SK-N-SH (cell line): ENCODE measurements at regions of chr6 and their contacts with region 1.

Region 1: DNA sequence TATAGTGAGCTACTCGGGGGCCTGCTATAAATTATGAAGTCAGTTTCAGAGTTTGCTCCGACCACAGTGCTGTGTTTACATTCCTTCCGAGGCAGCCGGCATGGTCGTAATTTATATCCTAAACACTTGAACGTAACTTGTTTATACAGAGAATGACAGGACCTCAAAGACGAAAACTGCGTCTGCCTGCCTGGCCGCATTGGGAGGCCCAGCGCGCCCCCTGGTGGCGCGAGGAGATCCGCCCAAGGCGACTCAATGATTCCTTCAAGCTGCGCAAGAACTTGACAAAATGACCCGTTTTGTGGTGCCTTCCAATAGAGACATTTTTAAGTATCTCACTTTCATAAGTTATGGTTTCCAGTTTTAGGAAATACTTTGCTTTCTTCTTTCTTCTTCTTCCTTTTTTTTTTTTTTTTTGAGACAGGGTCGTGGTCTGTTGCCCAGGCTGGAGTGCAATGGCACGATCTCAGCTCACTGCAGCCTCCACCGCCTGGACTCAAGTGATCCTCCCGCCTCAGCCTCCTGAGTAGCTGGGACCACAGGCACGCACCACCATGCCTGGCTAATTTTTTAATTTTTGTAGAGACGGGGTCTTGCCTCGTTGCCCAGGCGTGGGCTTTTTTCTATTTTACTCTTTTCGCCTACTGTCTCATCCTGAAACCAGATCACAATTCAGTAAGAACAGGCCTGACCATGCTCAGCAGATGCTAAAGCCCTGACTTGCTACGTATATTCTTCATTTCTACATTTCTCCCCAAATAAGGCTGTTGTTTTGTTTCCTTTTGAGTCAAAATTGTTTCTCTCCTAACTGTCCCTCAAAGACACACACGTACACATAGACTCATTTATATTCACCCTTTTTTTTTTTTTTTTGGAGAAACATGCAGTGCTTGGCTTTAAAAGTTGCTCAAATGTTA is 7.8 kb downstream of the FOXF2 start:
- DNase-seq: peak; percentile 81
- H3K4me3 ChIP-seq: peak overlapping the region in 1 of 2 experiments; percentile 51; a peak in 1 of 4 replicates
- H3K27ac ChIP-seq: no peak overlapping the region
- H3K4me1 ChIP-seq: no peaks in the 10 kb centered on the region
- H3K27me3 ChIP-seq: peaks cover 96% of the 10 kb centered on the region
- CTCF ChIP-seq: peak; percentile 98
- EP300 ChIP-seq: no peak
- RAD21 ChIP-seq: peak; percentile 70

Region 2: GRCh38 chr6:797479-798077 is 599.6 kb before region 1 on chr6:
- CTCF ChIA-PET with region 1: interaction called, 10 read pairs
- POLR2A ChIA-PET with region 1: no interaction called
- DNase-seq: peak; percentile 36
- H3K4me3 ChIP-seq: peak overlapping the region in 1 of 2 experiments; percentile 42; a peak in 1 of 4 replicates
- H3K27ac ChIP-seq: no peak overlapping the region
- H3K4me1 ChIP-seq: peaks cover 0 to 4% of the 10 kb centered on the region in 2 experiments; a peak in 1 of 4 replicates
- H3K27me3 ChIP-seq: peaks cover 59% of the 10 kb centered on the region
- CTCF ChIP-seq: peak; percentile 85
- EP300 ChIP-seq: no peak
- RAD21 ChIP-seq: peak; percentile 76

Region 3: GRCh38 chr6:1381481-1382330 is 15.5 kb before region 1 on chr6:
- CTCF ChIA-PET with region 1: interaction called, 42 read pairs
- POLR2A ChIA-PET with region 1: no interaction called
- DNase-seq: peak; percentile 86
- H3K4me3 ChIP-seq: peak overlapping the region in 1 of 2 experiments; percentile 29; a peak in 1 of 4 replicates
- H3K27ac ChIP-seq: no peak overlapping the region
- H3K4me1 ChIP-seq: no peaks in the 10 kb centered on the region
- H3K27me3 ChIP-seq: peaks cover 96% of the 10 kb centered on the region
- CTCF ChIP-seq: peak; percentile 65
- EP300 ChIP-seq: no peak
- RAD21 ChIP-seq: peak; percentile 67

Region 4: GRCh38 chr6:1407499-1407990 is 10.3 kb after region 1 on chr6:
- CTCF ChIA-PET with region 1: interaction called, 18 read pairs
- POLR2A ChIA-PET with region 1: no interaction called
- DNase-seq: no peak
- H3K4me3 ChIP-seq: no peak overlapping the region
- H3K27ac ChIP-seq: no peak overlapping the region
- H3K4me1 ChIP-seq: no peaks in the 10 kb centered on the region
- H3K27me3 ChIP-seq: peaks cover 38% of the 10 kb centered on the region
- CTCF ChIP-seq: no peak
- EP300 ChIP-seq: no peak
- RAD21 ChIP-seq: no peak

Region 5: GRCh38 chr6:1424306-1424928 is 27.2 kb after region 1 on chr6:
- CTCF ChIA-PET with region 1: interaction called, 12 read pairs
- POLR2A ChIA-PET with region 1: no interaction called
- DNase-seq: peak; percentile 34
- H3K4me3 ChIP-seq: no peak overlapping the region
- H3K27ac ChIP-seq: no peak overlapping the region
- H3K4me1 ChIP-seq: no peaks in the 10 kb centered on the region
- H3K27me3 ChIP-seq: peaks cover 41% of the 10 kb centered on the region; the same call in 1 of the 2 replicates
- CTCF ChIP-seq: peak; percentile 55
- EP300 ChIP-seq: no peak
- RAD21 ChIP-seq: no peak